ENCODE measurements at regions of chr10 and their contacts with region 1.

Region 1: GRCh38 chr10:97334370-97335175 is at the start of gene FRAT2:
- DNase-seq: peak; percentile 91 to 94 (median 92)
- H3K4me3 ChIP-seq: peak within 1 kb of the TSS; percentile 94
- H3K27ac ChIP-seq: peak within 1 kb of the TSS; percentile 72 to 97
- H3K4me1 ChIP-seq: peaks cover 8% of the 10 kb centered on the region
- H3K27me3 ChIP-seq: no peaks in the 10 kb centered on the region
- CTCF ChIP-seq: peak in 1 of 3 donors; percentile 13
- EP300 ChIP-seq: no peak
- POLR2A ChIP-seq: peak; percentile 70
- total RNA-seq, gene FRAT2: 4.2 to 16.8 (median 6.5) TPM

Region 2: DNA sequence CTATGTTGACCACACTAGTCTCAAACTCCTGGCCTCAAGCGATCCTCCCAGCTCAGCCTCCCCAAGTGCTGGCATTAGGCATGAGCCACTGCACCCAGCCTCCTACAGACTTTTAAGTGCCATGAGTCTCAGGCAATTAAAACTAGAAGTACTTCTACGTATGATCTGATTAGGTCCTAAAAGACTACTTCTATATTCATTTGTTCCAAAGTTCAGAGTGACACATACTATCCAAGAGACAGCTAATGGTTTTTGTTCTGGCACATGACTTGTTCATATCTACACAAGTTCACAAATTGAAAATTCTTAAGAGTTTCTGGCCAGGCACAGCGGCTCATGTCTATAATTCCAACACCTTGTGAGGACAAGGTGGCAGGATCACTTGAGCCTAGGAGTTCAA is 53.8 kb before region 1 on chr10:
- intact Hi-C with region 1: loop called in 1 of 4 experiments (anchors 10 kb)
- DNase-seq: no peak
- H3K4me3 ChIP-seq: no peak overlapping the region
- H3K27ac ChIP-seq: no peak overlapping the region
- H3K4me1 ChIP-seq: no peaks in the 10 kb centered on the region
- H3K27me3 ChIP-seq: no peaks in the 10 kb centered on the region
- CTCF ChIP-seq: no peak
- EP300 ChIP-seq: no peak
- POLR2A ChIP-seq: no peak

Region 3: DNA sequence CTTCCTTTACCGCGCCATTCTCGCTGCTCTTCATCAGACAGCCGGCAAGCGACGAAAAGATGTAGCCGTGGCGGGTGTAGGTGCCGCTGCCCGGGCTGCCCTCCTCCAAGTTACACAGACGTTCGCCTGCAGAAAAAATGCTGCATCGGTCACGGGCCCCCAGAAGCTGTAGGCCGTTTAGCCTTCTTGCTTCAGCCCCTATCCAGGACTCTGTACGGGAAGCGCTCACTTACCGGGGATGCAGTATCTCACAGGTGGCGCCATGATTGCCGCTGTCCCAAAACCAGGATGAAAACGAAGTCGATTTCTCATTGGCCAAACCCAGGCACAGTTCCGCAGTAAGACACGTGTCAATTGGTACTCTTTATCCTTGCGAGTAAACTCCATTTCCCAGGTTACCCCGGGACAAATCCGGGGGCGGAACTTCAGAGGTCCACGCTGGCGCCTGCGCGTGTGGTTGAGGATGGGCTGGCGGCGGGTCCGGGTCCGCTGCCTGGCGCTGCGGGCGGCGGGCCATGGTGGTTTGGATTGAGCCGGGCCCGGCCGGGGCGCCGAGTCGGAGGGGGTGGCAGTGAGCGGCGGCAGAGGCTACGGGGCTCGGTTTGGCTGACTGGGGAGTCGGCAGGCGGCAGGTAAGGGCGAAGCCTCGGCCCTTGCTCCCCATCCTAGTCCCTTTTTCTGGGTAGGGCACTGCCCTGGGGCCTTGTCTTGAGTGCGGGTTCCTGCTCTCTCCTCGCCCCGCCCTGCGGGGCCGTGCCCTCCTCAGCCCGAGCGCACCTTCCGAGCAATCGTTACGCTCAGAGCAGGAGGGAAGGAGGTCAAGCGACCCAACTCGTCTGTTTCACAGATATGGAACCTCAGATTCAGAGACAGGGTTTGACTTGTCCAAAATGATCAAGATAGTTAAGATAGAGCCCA is 111.4 kb after region 1 on chr10 and contains the starts of genes EXOSC1 and ZDHHC16:
- intact Hi-C with region 1: no loop called
- DNase-seq: peak; percentile 86 to 91 (median 89)
- H3K4me3 ChIP-seq: peak within 1 kb of the TSS; percentile 94
- H3K27ac ChIP-seq: peak within 1 kb of the TSS; percentile 11 to 39
- H3K4me1 ChIP-seq: peaks cover 10% of the 10 kb centered on the region
- H3K27me3 ChIP-seq: no peaks in the 10 kb centered on the region
- CTCF ChIP-seq: peak in 1 of 3 donors; percentile 17
- EP300 ChIP-seq: no peak
- POLR2A ChIP-seq: peak; percentile 6
- total RNA-seq, gene EXOSC1: 22.1 to 38.3 (median 26.6) TPM
- total RNA-seq, gene ZDHHC16: 17.8 to 28.1 (median 26.2) TPM